Activated naive CD4-positive, alpha-beta T cell treated with anti-CD3 and anti-CD28 coated beads for 36 hours (primary cell): ENCODE measurements at regions of chr21 and their contacts with region 1.

Region 1: DNA sequence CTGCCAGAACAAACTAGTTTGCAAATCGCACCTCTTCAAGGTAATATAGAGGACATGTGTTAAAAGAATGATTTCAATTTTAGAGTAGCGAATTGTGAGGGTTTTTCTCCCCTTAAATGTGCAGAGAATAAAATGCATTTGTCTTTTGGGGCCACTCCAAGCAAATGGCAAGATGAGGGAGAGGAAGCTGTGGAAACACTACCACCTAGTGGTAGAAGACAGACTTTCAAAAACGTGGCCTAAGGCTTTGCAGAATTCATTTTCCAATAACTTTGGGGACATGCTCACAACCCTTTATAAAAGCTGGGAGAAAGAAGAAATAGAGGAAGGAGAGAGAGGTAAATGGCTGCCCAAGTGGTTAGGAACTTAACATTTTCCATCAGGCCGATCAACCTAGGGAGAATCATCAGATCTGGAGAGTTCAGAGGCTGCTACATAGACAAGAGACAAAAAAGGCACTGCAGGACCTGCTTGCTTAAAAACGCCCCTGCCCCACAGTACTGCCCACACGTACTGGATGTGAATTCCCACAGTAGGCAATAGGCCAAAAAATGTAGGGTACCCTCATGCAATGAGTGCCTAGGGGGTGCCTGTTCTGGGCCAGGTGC is 15.7 kb upstream of the RCAN1 start:
- DNase-seq: peak; percentile 43
- H3K4me3 Mint-ChIP-seq: no peak overlapping the region
- H3K27ac Mint-ChIP-seq: no peak overlapping the region
- H3K4me1 Mint-ChIP-seq: no peaks in the 10 kb centered on the region
- H3K27me3 Mint-ChIP-seq: peaks cover 7% of the 10 kb centered on the region

Region 2: GRCh38 chr21:34510148-34511142 is 120.2 kb before region 1 on chr21:
- CTCF ChIA-PET with region 1: interaction called, 13 read pairs
- intact Hi-C with region 1: loop called (anchors 1 kb)
- DNase-seq: peak; percentile 68
- H3K4me3 Mint-ChIP-seq: no peak overlapping the region
- H3K27ac Mint-ChIP-seq: no peak overlapping the region
- H3K4me1 Mint-ChIP-seq: no peaks in the 10 kb centered on the region
- H3K27me3 Mint-ChIP-seq: no peaks in the 10 kb centered on the region

Region 3: DNA sequence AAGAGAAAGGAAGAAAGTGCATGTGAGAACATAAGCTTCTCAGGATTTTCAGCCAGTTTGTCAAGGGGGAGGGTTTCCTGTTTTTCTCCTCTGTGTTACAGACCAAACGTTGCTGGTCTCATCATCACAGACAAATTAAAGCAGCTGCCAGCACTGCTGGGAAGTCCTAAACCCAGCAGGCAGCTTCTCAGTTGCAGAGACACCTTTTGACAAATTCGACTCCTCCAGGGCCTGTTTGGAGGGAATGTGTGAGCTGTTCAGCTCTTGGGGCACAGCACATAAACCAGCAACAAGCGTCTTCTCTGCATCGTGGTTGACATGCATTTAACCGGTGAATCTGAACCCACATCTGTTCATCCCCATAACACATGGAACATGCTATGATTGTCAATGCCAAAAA is 873.0 kb after region 1 on chr21:
- CTCF ChIA-PET with region 1: no interaction called
- intact Hi-C with region 1: no loop called
- DNase-seq: peak; percentile 55
- H3K4me3 Mint-ChIP-seq: peak overlapping the region; percentile 25
- H3K27ac Mint-ChIP-seq: peak overlapping the region; percentile 77
- H3K4me1 Mint-ChIP-seq: peaks cover 35% of the 10 kb centered on the region
- H3K27me3 Mint-ChIP-seq: no peaks in the 10 kb centered on the region